ENCODE measurements at regions of chr17 and their contacts with region 1.

Region 1: DNA sequence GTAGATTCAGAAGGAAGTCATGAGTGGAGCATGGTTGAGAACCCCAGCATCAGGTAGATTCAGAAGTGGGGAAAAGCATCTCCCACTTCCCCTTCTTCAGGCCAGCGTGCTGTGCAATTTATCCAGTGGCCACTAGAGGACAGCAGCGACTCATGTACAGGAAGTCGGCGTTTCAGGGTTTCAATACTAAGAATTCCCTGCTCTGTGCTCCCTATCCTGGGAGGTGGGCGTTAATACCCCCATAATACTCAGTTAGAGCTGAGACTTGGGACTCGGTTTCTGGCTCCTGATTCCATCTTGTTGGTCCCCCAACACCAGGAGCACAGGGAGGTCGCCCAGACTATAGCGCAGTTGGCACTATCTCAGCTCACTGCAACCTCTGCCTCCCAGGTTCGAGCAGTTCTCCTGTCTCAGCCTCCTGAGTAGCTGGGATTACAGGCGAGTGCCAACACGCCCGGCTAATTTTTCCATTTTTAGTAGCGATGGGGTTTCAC is 75.3 kb upstream of the AMZ2 start:
- DNase-seq: peak; percentile 66 to 88
- ATAC-seq: peak; percentile 77 to 95 (median 87)
- H3K4me3 ChIP-seq: no peak overlapping the region
- H3K4me3 Mint-ChIP-seq: no peak overlapping the region
- H3K27ac ChIP-seq: no peak overlapping the region
- H3K27ac Mint-ChIP-seq: no peak overlapping the region
- H3K4me1 ChIP-seq: peaks cover 20% of the 10 kb centered on the region
- H3K4me1 Mint-ChIP-seq: peaks cover 15 to 20% of the 10 kb centered on the region in 2 donors
- H3K27me3 ChIP-seq: no peaks in the 10 kb centered on the region
- H3K27me3 Mint-ChIP-seq: no peaks in the 10 kb centered on the region
- CTCF ChIP-seq: peak; percentile 98

Region 2: GRCh38 chr17:68141050-68141449 is 31.5 kb before region 1 on chr17:
- intact Hi-C with region 1: no loop called
- DNase-seq: no peak
- ATAC-seq: no peak
- H3K4me3 ChIP-seq: no peak overlapping the region
- H3K4me3 Mint-ChIP-seq: no peak overlapping the region
- H3K27ac ChIP-seq: no peak overlapping the region
- H3K27ac Mint-ChIP-seq: no peak overlapping the region
- H3K4me1 ChIP-seq: no peaks in the 10 kb centered on the region
- H3K4me1 Mint-ChIP-seq: no peaks in the 10 kb centered on the region
- H3K27me3 ChIP-seq: no peaks in the 10 kb centered on the region
- H3K27me3 Mint-ChIP-seq: no peaks in the 10 kb centered on the region
- CTCF ChIP-seq: no peak

Region 3: GRCh38 chr17:68255731-68256538 is 83.4 kb after region 1 on chr17:
- intact Hi-C with region 1: no loop called
- DNase-seq: peak in 1 of 2 donors; percentile 64
- ATAC-seq: peak; percentile 20 to 46 (median 30)
- H3K4me3 ChIP-seq: no peak overlapping the region
- H3K4me3 Mint-ChIP-seq: peak overlapping the region; percentile 93
- H3K27ac ChIP-seq: peak overlapping the region; percentile 98
- H3K27ac Mint-ChIP-seq: peak overlapping the region; percentile 97 to 100
- H3K4me1 ChIP-seq: peaks cover 67% of the 10 kb centered on the region
- H3K4me1 Mint-ChIP-seq: peaks cover 72 to 73% of the 10 kb centered on the region in 2 donors
- H3K27me3 ChIP-seq: no peaks in the 10 kb centered on the region
- H3K27me3 Mint-ChIP-seq: no peaks in the 10 kb centered on the region
- CTCF ChIP-seq: no peak

Region 4: DNA sequence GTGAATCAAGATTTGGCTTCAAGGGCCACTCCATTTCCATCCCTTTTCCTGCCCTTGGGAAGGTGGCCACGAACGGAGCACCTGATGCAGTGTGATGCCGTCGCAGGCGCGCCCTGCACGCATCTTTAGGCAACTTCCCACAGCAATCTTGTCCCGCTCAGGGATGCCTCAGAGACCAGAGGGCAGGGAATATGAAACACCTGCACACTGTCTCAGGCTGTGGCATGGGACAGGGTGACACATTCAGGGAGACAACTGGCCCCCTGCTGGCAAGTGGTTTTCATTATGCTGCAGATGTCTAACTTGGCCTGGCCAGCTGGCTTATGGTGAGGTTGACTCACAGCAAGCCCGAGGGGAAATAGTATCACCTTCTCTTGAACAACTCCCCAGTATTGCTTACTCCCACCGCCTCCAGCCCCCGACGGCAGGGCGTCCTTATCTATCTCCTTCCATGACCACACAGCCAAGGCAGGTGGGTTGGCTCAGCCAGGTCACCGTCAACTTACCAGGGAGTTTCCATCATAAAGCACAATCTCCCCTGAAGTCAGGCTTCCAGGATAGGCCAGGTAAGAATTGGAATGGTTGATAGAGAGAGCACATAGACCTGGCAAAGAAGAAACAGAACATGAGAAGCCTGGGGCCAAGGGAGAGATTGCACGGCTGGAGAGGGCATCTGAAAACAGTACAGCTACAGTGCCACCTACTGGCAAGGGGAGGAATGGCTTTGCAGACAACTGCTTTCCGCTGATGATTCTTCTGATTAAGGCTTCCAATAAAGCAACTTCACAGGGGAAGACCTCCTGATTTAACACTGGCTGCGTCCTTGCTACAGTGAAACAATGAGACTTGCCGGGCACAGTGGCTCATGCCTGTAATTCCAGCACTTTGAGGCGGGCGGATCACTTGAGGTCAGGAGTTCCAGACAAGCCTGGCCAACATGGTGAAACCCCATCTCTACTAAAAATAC is 263.7 kb after region 1 on chr17:
- intact Hi-C with region 1: loop called (anchors 1 kb)
- DNase-seq: peak; percentile 78 to 94
- ATAC-seq: peak; percentile 80 to 90 (median 81)
- H3K4me3 ChIP-seq: no peak overlapping the region
- H3K4me3 Mint-ChIP-seq: peak overlapping the region; percentile 87
- H3K27ac ChIP-seq: no peak overlapping the region
- H3K27ac Mint-ChIP-seq: peak overlapping the region; percentile 96
- H3K4me1 ChIP-seq: peaks cover 32% of the 10 kb centered on the region
- H3K4me1 Mint-ChIP-seq: peaks cover 42 to 56% of the 10 kb centered on the region in 2 donors
- H3K27me3 ChIP-seq: no peaks in the 10 kb centered on the region
- H3K27me3 Mint-ChIP-seq: no peaks in the 10 kb centered on the region
- CTCF ChIP-seq: peak; percentile 83

Measured in natural killer cell (primary cell).